ENCODE measurements at regions of chr17 and their contacts with region 1.

Region 1: DNA sequence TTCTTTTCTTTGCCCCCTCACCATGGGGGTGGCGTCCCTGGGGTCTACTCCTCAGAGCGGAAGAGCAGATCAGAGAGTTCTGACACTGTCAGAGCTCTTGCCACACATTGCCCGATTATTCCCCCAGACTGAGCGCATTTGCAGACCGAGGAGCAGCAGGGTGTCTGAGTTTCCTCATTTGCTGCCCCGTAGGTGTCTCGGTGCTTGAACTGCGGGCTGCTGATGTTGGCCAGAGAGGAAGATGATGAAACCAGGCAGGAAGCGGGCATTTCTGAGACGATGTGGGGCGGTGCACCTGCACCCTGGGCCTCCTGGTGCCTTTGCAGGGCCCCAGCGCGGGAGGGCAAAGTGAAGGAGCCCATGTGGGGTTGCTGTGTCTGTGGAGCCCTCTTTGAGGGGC is 55.2 kb downstream of the ARSG start:
- DNase-seq: peak; percentile 24
- ATAC-seq: peak; percentile 82
- H3K4me3 ChIP-seq: 0 out of 2 replicates have a peak overlapping the region, but pooled peaks have one; percentile 15
- H3K27ac ChIP-seq: peak overlapping the region; percentile 45
- H3K4me1 ChIP-seq: peaks cover 11% of the 10 kb centered on the region
- H3K27me3 ChIP-seq: no peaks in the 10 kb centered on the region
- CTCF ChIP-seq: no peak
- EP300 ChIP-seq: no peak
- POLR2A ChIP-seq: peak; percentile 77
- RAD21 ChIP-seq: no peak

Region 2: DNA sequence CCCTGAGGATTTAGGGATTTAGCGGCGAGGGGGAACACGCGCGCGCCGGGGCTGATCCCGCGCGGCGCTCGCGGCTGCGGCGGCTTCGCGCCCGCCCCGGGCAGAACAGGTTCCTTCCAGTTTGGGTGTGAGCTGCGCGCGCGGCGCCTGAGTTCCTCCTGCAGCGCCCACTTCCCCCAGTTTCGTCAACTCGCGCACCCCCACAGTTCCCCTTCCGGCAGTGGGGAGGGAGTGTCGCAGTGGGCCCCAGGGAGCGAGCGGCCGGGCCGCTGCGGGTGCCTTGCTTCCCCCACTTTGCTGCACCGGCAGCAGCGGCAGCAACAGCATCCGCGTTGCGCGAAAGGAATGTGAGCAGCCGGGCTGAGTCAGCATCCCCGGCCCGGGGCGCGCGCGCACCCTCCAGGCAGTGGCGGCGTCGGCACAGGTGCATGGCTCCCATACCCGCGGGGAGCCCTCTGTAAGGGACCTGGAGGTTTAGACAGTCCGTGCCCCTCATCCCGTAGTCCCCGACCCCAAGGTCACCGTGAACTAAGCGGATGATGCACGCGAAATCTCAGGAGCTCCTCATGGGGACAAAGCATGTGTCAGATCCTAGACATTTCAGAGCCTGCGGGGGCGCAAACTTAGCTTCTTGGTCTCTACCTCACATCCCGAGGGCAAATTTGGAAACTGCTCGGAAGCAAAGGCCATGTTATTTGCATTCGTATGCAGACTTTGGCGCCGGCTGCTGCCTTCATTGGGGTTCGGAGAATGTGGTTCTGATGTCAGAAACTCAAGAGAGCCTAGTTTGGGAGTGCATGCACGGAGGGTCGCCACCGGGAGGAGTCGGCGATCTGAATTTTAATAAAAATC is 54.4 kb before region 1 on chr17:
- CTCF ChIA-PET with region 1: no interaction called
- POLR2A ChIA-PET with region 1: no interaction called
- RAD21 ChIA-PET with region 1: no interaction called
- SMC1A ChIA-PET with region 1: no interaction called
- in situ Hi-C with region 1: no loop called
- intact Hi-C with region 1: loop called (anchors 5 kb)
- DNase-seq: peak; percentile 70
- ATAC-seq: peak; percentile 78
- H3K4me3 ChIP-seq: peak overlapping the region; percentile 74
- H3K27ac ChIP-seq: peak overlapping the region; percentile 95
- H3K4me1 ChIP-seq: peaks cover 22% of the 10 kb centered on the region
- H3K27me3 ChIP-seq: no peaks in the 10 kb centered on the region
- CTCF ChIP-seq: peak; percentile 0 to 24 (median 11); a peak in 2 of 6 replicates
- EP300 ChIP-seq: peak in 1 of 2 experiments; percentile 46; a peak in 1 of 4 replicates
- POLR2A ChIP-seq: peak; percentile 87
- RAD21 ChIP-seq: no peak